Colonic mucosa (tissue), 4 donors: ENCODE measurements at regions of chr3 and their contacts with region 1.

Region 1: GRCh38 chr3:135895106-135895733 is 70.3 kb upstream of the PPP2R3A start:
- DNase-seq: peak; percentile 72
- H3K4me3 ChIP-seq: no peak overlapping the region
- H3K27ac ChIP-seq: no peak overlapping the region
- H3K4me1 ChIP-seq: no peaks in the 10 kb centered on the region
- H3K27me3 ChIP-seq: no peaks in the 10 kb centered on the region
- CTCF ChIP-seq: peak; percentile 79

Region 2: GRCh38 chr3:134600685-134601463 is 1294.3 kb before region 1 on chr3:
- intact Hi-C with region 1: loop called (anchors 10 kb)
- DNase-seq: peak; percentile 66
- H3K4me3 ChIP-seq: no peak overlapping the region
- H3K27ac ChIP-seq: no peak overlapping the region
- H3K4me1 ChIP-seq: no peaks in the 10 kb centered on the region
- H3K27me3 ChIP-seq: no peaks in the 10 kb centered on the region
- CTCF ChIP-seq: peak; percentile 96

Region 3: DNA sequence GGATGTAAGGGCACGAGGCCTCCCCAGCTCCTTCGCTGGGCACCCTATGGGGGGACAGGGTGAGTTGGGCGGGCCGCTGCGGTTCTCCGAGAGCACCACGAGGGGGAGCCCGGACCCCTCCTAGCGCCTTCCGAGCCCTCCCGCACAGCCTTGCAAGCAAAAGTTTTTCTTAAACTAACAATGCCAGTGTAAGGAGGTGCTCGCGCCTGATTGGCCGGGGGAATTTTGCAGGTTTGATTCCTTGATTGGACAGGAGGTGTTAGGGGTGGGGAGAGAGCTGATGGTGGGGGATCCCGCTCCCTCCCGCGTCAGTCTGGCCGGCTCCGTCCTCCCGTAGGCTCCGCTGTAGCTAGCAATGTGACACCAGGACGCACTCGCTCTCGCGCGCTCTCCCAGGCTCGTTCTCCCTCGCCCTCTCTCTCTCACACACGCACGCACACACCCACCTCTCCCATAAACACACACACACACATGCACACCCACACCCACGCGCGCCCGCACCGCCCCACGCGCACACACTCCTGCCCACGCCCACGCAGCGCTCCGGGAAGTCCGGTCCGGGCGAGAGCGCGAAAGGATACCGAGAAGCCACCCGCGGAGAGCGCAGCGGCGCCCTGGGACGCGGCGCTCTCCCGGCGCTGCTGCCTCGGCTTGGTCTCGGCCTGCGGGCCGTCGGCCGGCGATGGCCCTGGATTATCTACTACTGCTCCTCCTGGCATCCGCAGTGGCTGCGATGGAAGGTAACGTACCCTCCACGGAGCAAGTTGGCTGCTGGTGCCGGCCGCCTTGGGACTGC is 1100.1 kb before region 1 on chr3 and contains the start of gene EPHB1:
- intact Hi-C with region 1: loop called (anchors 5 kb)
- DNase-seq: peak; percentile 72
- H3K4me3 ChIP-seq: peak within 1 kb of the TSS; percentile 43
- H3K27ac ChIP-seq: no peak within 1 kb of the TSS
- H3K4me1 ChIP-seq: no peaks in the 10 kb centered on the region
- H3K27me3 ChIP-seq: peaks cover 29% of the 10 kb centered on the region
- CTCF ChIP-seq: peak; percentile 73
- total RNA-seq, gene EPHB1: 0.40 to 0.74 TPM

Region 4: GRCh38 chr3:135736740-135737139 is 158.5 kb before region 1 on chr3:
- intact Hi-C with region 1: loop called (anchors 2 kb)
- DNase-seq: peak; percentile 47
- H3K4me3 ChIP-seq: no peak overlapping the region
- H3K27ac ChIP-seq: no peak overlapping the region
- H3K4me1 ChIP-seq: no peaks in the 10 kb centered on the region
- H3K27me3 ChIP-seq: no peaks in the 10 kb centered on the region
- CTCF ChIP-seq: peak; percentile 49